AG04450 (cell line): ENCODE measurements at regions of chr7 and their contacts with region 1.

Region 1: GRCh38 chr7:4973728-4974198 is 14.8 kb upstream of the MMD2 start:
- DNase-seq: peak; percentile 68
- H3K4me3 ChIP-seq: peak overlapping the region; percentile 78
- H3K27ac ChIP-seq: peak overlapping the region; percentile 89
- H3K27me3 ChIP-seq: no peaks in the 10 kb centered on the region
- CTCF ChIP-seq: peak; percentile 81

Region 2: GRCh38 chr7:4681886-4682620 is 291.7 kb before region 1 on chr7 and contains the start of gene FOXK1:
- CTCF ChIA-PET with region 1: interaction called, 14 read pairs
- POLR2A ChIA-PET with region 1: no interaction called
- DNase-seq: no peak
- H3K4me3 ChIP-seq: peak within 1 kb of the TSS; percentile 87
- H3K27ac ChIP-seq: peak within 1 kb of the TSS; percentile 95
- H3K27me3 ChIP-seq: no peaks in the 10 kb centered on the region
- CTCF ChIP-seq: no peak
- polyA plus RNA-seq, gene FOXK1: 3.4 and 4.7 TPM in 2 replicates

Region 3: GRCh38 chr7:4700577-4701235 is 273.1 kb before region 1 on chr7:
- CTCF ChIA-PET with region 1: no interaction called
- POLR2A ChIA-PET with region 1: no interaction called
- DNase-seq: peak; percentile 76
- H3K4me3 ChIP-seq: no peak overlapping the region
- H3K27ac ChIP-seq: peak overlapping the region; percentile 57
- H3K27me3 ChIP-seq: no peaks in the 10 kb centered on the region
- CTCF ChIP-seq: no peak

Region 4: DNA sequence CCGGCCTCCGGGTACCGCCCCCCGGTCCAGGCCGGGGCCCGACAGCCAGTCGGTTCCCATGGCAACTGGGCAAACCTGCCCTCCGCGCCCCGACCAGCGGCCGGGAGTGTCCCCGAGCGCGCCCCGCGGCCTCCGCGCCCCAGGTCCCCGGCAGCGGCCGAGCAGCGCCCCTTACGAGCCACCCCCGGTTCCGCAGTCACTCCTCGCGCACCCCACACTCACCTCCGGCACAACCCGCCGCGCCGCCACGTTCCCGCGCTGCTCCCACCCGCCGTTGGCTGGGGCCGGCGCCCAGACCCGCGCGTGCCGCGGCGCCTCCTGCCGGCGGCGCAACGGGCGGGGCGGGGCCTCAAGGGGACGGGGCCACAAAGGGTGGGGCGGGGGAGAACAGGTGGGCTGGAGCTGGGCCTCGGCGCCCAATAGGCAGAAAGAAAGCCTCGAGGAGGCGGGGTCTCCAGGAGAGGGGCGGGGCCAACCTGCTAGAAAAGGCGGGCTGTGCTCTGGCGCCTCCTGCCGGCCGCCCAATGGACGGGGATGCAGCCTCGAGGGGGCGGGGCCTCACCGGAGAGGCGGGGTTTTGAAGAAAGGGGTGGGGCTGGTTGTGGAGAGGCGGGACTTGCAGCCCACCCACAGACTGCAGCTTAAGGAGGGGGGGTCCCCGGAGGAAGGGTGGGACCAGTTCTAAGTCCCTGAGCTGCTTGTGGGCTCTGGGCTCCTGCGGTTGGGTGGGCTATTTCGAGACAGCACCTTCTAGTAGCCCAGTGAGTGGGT is 90.2 kb before region 1 on chr7 and contains the start of gene RADIL:
- CTCF ChIA-PET with region 1: interaction called, 4 read pairs
- POLR2A ChIA-PET with region 1: interaction called, 12 read pairs
- DNase-seq: no peak
- H3K4me3 ChIP-seq: peak within 1 kb of the TSS; percentile 41
- H3K27ac ChIP-seq: peak within 1 kb of the TSS; percentile 2
- H3K27me3 ChIP-seq: peaks cover 14% of the 10 kb centered on the region
- CTCF ChIP-seq: peak; percentile 62
- polyA plus RNA-seq, gene RADIL: 0.07 and 0.31 TPM in 2 replicates

Region 5: GRCh38 chr7:4951903-4952636 is 21.7 kb before region 1 on chr7:
- CTCF ChIA-PET with region 1: interaction called, 10 read pairs
- POLR2A ChIA-PET with region 1: no interaction called
- DNase-seq: no peak
- H3K4me3 ChIP-seq: no peak overlapping the region
- H3K27ac ChIP-seq: no peak overlapping the region
- H3K27me3 ChIP-seq: no peaks in the 10 kb centered on the region
- CTCF ChIP-seq: no peak